PC-9 (cell line): ENCODE measurements at regions of chr6 and their contacts with region 1.

Region 1: GRCh38 chr6:95352064-95352795 is 225.1 kb upstream of the MANEA start:
- DNase-seq: no peak
- H3K4me3 ChIP-seq: no peak overlapping the region
- H3K27ac ChIP-seq: no peak overlapping the region
- H3K4me1 ChIP-seq: no peaks in the 10 kb centered on the region
- H3K27me3 ChIP-seq: no peaks in the 10 kb centered on the region
- CTCF ChIP-seq: 0 out of 2 replicates have a peak, but pooled peaks have one; percentile 30

Region 2: GRCh38 chr6:95203153-95203754 is 149.0 kb before region 1 on chr6:
- CTCF ChIA-PET with region 1: no interaction called
- POLR2A ChIA-PET with region 1: no interaction called
- intact Hi-C with region 1: loop called (anchors 10 kb)
- DNase-seq: peak in 1 of 2 experiments; percentile 4
- H3K4me3 ChIP-seq: no peak overlapping the region
- H3K27ac ChIP-seq: no peak overlapping the region
- H3K4me1 ChIP-seq: no peaks in the 10 kb centered on the region
- H3K27me3 ChIP-seq: no peaks in the 10 kb centered on the region
- CTCF ChIP-seq: peak; percentile 86

Region 3: GRCh38 chr6:95530176-95530819 is 178.1 kb after region 1 on chr6:
- CTCF ChIA-PET with region 1: no interaction called
- POLR2A ChIA-PET with region 1: no interaction called
- intact Hi-C with region 1: no loop called
- DNase-seq: no peak
- H3K4me3 ChIP-seq: no peak overlapping the region
- H3K27ac ChIP-seq: no peak overlapping the region
- H3K4me1 ChIP-seq: no peaks in the 10 kb centered on the region
- H3K27me3 ChIP-seq: no peaks in the 10 kb centered on the region
- CTCF ChIP-seq: no peak